GM23248 (cell line): ENCODE measurements at regions of chr3 and their contacts with region 1.

Region 1: GRCh38 chr3:187745201-187746058 is at the start of gene BCL6:
- DNase-seq: peak; percentile 99
- H3K4me3 ChIP-seq: peak within 1 kb of the TSS; percentile 96
- H3K27ac ChIP-seq: peak within 1 kb of the TSS; percentile 97
- H3K4me1 ChIP-seq: peaks cover 21% of the 10 kb centered on the region
- H3K27me3 ChIP-seq: no peaks in the 10 kb centered on the region
- total RNA-seq, gene BCL6: 32.3 and 61.6 TPM in 2 replicates

Region 2: GRCh38 chr3:187955076-187955952 is 209.9 kb after region 1 on chr3:
- in situ Hi-C with region 1: loop called (anchors 25 kb)
- DNase-seq: peak; percentile 90
- H3K4me3 ChIP-seq: peak overlapping the region; percentile 41
- H3K27ac ChIP-seq: peak overlapping the region; percentile 91
- H3K4me1 ChIP-seq: peaks cover 22% of the 10 kb centered on the region
- H3K27me3 ChIP-seq: no peaks in the 10 kb centered on the region

Region 3: GRCh38 chr3:188164248-188164687 is 418.8 kb after region 1 on chr3:
- in situ Hi-C with region 1: loop called (anchors 10 kb)
- DNase-seq: no peak
- H3K4me3 ChIP-seq: no peak overlapping the region
- H3K27ac ChIP-seq: no peak overlapping the region
- H3K4me1 ChIP-seq: peaks cover 10% of the 10 kb centered on the region; the same call in 1 of the 2 replicates
- H3K27me3 ChIP-seq: no peaks in the 10 kb centered on the region

Region 4: DNA sequence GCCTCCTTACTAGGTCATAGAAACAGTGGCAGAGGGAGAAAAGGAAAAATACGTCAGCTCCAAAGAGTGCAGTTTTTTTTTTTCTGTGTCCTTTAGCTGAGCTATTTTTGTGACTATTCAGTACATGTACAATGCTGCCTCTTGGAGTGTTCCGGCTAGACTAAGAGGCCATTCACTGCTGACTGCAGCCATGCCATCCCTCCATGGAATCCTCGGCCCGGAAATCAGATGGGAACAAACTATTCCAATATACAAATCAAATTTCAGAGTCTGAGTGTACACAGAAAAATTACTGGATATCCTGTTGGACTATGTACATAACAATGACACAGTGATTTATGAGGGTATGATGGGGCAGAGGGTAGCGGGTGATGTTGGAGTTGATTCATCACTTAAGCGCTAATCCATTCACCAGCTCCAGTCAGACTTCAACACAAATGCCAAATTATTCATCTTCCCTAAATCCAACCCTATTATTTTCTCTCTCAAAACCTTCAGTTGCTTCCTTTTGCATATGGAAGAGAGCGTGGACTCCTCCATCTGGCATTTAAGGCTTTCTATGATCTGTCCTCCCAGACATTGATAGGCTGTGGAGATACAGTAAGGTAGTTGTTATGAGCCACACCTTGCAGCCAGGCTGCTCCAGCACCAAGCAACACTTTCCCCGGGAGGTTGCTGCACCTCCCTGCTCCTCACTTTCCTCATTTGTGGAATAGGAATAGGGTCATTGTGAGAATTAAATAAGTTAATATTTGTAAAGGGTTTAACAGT is 517.7 kb after region 1 on chr3:
- in situ Hi-C with region 1: loop called (anchors 10 kb)
- DNase-seq: peak; percentile 84
- H3K4me3 ChIP-seq: no peak overlapping the region; the same call in 1 of the 2 replicates
- H3K27ac ChIP-seq: peak overlapping the region; percentile 97
- H3K4me1 ChIP-seq: peaks cover 72% of the 10 kb centered on the region
- H3K27me3 ChIP-seq: no peaks in the 10 kb centered on the region

Region 5: GRCh38 chr3:188489639-188490405 is 744.4 kb after region 1 on chr3:
- in situ Hi-C with region 1: loop called (anchors 25 kb)
- DNase-seq: peak; percentile 86
- H3K4me3 ChIP-seq: no peak overlapping the region
- H3K27ac ChIP-seq: peak overlapping the region; percentile 62
- H3K4me1 ChIP-seq: peaks cover 40% of the 10 kb centered on the region
- H3K27me3 ChIP-seq: no peaks in the 10 kb centered on the region

Region 6: GRCh38 chr3:188683032-188683521 is 937.6 kb after region 1 on chr3:
- in situ Hi-C with region 1: loop called (anchors 25 kb)
- DNase-seq: peak; percentile 96
- H3K4me3 ChIP-seq: 0 out of 2 replicates have a peak overlapping the region, but pooled peaks have one; percentile 11
- H3K27ac ChIP-seq: peak overlapping the region; percentile 93
- H3K4me1 ChIP-seq: peaks cover 37% of the 10 kb centered on the region
- H3K27me3 ChIP-seq: no peaks in the 10 kb centered on the region